HEK293 (cell line): ENCODE measurements at regions of chr11 and their contacts with region 1.

Region 1: GRCh38 chr11:75280227-75280701 is 39.7 kb downstream of the TPBGL start:
- H3K4me3 ChIP-seq: no peak overlapping the region
- H3K27ac ChIP-seq: no peak overlapping the region
- H3K4me1 ChIP-seq: no peaks in the 10 kb centered on the region
- CTCF ChIP-seq: peak; percentile 80

Region 2: DNA sequence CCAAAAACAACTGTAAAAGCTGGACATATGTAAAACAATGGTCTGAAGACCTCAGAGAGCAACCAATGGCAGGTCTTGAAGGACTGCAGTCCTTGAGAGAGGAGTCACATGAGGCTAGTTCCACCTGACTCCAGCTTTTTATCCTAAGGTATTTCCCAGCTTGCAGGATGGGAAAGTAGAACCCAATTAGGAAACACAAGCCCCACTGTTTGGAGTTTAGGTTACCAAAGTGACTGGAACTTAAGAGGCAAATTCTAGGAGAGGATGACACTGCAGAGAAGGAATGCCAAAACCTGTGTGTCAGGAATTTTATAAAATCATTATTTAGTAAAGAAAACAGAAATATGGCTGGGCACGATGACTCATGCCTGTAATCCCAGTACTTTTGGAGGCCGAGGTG is 202.0 kb before region 1 on chr11:
- CTCF ChIA-PET with region 1: no interaction called
- POLR2A ChIA-PET with region 1: no interaction called
- H3K4me3 ChIP-seq: no peak overlapping the region
- H3K27ac ChIP-seq: no peak overlapping the region
- H3K4me1 ChIP-seq: no peaks in the 10 kb centered on the region
- CTCF ChIP-seq: no peak

Region 3: DNA sequence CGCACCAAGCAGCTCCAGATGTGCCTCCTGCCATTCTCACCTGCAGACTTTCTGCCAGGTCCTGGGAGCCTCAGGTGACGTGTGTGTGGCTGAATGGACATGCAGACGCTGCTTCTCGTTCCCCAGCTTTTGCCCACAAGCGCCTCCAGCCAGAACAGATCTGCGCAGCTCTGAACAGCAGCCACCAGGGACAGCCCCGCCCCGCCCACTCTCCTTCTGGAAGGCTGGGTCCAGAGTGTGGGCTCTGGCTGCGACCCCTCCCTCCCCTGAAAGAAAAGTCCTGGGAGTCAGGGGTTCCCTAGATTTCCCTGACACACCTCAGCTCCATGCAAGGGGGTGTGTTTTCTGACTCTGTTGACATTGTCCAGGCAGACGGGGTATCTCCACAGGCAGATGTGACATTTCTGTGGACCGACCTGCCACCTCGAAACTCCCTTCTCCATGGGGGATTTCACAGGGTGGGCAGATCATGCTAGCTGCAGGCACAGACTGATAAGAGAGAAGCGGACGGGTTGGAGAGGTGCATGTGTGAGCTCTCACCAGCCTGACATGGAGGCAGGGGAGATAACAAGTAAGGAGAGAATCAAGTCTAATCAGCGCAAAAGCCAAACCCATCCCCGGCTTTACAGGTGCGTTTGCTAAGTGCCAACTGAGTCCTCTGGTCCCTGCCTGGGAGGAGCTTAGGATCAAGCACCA is 109.6 kb before region 1 on chr11:
- CTCF ChIA-PET with region 1: no interaction called
- POLR2A ChIA-PET with region 1: no interaction called
- H3K4me3 ChIP-seq: no peak overlapping the region
- H3K27ac ChIP-seq: no peak overlapping the region
- H3K4me1 ChIP-seq: no peaks in the 10 kb centered on the region
- CTCF ChIP-seq: no peak

Region 4: GRCh38 chr11:75328426-75329277 is 48.4 kb after region 1 on chr11:
- CTCF ChIA-PET with region 1: interaction called, 21 read pairs
- POLR2A ChIA-PET with region 1: no interaction called
- H3K4me3 ChIP-seq: no peak overlapping the region
- H3K27ac ChIP-seq: no peak overlapping the region
- H3K4me1 ChIP-seq: no peaks in the 10 kb centered on the region
- CTCF ChIP-seq: peak; percentile 52; the same call in 1 of the 2 replicates

Region 5: DNA sequence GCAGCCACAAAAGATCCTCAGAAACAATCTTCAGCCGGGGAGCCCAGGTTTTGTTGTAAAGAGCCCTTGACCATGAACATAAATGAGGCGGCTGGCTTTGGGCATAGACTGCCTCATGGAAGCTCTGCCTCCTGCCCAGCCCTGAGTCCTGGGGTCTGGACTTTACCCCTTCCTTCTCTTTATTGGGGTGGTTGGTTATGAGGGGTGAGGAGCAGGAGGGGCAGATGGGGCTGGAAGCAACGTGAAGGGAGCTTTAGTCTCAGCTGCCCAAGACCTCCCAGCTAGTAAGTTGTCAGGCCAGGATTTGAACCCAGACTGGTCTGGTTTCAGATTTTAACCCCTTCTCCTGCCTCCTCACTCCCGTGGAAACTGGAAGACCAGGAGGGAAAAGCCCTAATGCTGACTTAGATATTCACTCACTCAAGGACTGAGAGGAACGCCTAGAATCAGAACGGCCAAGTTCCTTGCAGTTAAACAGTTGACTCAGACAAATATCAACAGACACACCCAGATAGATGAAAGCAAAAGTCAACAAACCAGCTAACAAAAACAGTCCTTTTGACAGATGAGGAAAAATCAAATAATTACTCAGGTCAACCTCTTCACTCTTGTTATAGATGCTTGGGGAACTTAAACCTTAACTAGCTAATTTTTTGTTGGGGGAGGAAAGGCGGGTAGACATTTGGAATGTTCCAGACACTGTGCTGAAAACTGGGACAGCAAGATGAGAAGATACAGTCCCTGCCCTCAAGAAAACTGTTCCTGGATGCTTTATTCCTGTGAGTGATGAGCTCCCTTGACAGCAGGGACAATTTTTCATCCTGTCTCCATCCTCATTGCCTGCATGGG is 91.9 kb after region 1 on chr11:
- CTCF ChIA-PET with region 1: interaction called, 12 read pairs
- POLR2A ChIA-PET with region 1: no interaction called
- H3K4me3 ChIP-seq: no peak overlapping the region
- H3K27ac ChIP-seq: no peak overlapping the region; the same call in 1 of the 2 replicates
- H3K4me1 ChIP-seq: peaks cover 7% of the 10 kb centered on the region
- CTCF ChIP-seq: no peak